ENCODE measurements at regions of chr1 and their contacts with region 1.

Region 1: GRCh38 chr1:119885903-119886783 is 10.2 kb downstream of the ADAM30 start:
- DNase-seq: peak; percentile 75
- H3K4me3 Mint-ChIP-seq: no peak overlapping the region
- H3K27ac Mint-ChIP-seq: no peak overlapping the region
- H3K4me1 Mint-ChIP-seq: no peaks in the 10 kb centered on the region
- H3K27me3 Mint-ChIP-seq: peaks cover 22% of the 10 kb centered on the region

Region 2: GRCh38 chr1:119870917-119871596 is 15.1 kb before region 1 on chr1:
- CTCF ChIA-PET with region 1: interaction called, 12 read pairs
- POLR2A ChIA-PET with region 1: no interaction called
- intact Hi-C with region 1: no loop called
- DNase-seq: peak; percentile 73
- H3K4me3 Mint-ChIP-seq: no peak overlapping the region
- H3K27ac Mint-ChIP-seq: no peak overlapping the region
- H3K4me1 Mint-ChIP-seq: peaks cover 1% of the 10 kb centered on the region
- H3K27me3 Mint-ChIP-seq: peaks cover 16% of the 10 kb centered on the region

Measured in activated CD4-positive, alpha-beta memory T cell treated with anti-CD3 and anti-CD28 coated beads for 36 hours (primary cell).